ENCODE measurements at regions of chr9 and their contacts with region 1.

Region 1: DNA sequence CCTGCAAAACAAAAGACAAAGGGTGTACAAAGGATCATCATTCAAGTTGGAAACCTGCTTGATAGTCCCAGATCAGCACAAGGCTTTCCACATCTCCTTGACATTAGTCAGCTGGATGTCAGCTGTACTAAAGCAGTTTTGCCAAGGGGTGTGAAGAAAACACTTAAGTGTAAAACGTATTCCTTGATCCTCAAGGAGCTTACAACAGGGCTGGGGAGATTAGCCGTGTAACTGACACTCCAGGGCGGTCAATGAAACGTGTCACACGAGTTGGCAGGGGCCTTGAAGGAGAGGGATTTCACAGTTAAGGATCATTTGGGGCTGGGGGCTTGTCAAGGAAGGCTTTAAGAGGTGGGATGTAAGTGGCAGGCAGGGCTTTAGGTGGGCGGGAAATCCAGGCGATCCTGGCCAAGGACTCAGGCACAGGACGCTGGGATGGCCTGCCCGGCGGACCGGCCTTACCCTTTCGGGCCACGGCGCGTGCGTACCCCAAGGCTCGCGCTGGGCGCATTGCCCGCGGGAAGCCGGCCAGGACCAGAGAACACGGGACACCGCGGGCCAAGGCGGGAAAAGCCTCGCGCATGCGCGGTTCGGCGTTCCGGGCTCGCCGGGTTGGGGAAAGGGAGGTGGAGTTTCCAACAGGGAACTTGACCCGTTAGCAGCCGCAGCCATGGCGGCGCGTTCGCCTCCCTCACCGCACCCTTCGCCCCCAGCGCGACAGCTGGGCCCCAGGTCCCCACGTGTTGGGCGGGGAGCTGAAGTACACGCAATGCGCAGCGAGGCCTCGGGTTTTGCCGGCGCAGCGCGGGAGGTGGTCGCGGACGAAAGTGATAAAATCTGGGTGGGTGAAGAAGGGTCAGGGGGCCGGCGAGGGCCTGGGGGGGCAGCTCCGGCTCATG is at the start of gene CNTLN:
- H3K4me3 Mint-ChIP-seq: peak within 1 kb of the TSS; percentile 90
- H3K27ac Mint-ChIP-seq: peak within 1 kb of the TSS; percentile 98
- H3K4me1 Mint-ChIP-seq: peaks cover 31% of the 10 kb centered on the region
- H3K27me3 Mint-ChIP-seq: no peaks in the 10 kb centered on the region

Region 2: GRCh38 chr9:17236147-17236546 is 101.5 kb after region 1 on chr9:
- intact Hi-C with region 1: loop called (anchors 5 kb)
- H3K4me3 Mint-ChIP-seq: no peak overlapping the region
- H3K27ac Mint-ChIP-seq: no peak overlapping the region
- H3K4me1 Mint-ChIP-seq: peaks cover 8% of the 10 kb centered on the region
- H3K27me3 Mint-ChIP-seq: no peaks in the 10 kb centered on the region